ENCODE measurements at regions of chr6 and their contacts with region 1.

Region 1: DNA sequence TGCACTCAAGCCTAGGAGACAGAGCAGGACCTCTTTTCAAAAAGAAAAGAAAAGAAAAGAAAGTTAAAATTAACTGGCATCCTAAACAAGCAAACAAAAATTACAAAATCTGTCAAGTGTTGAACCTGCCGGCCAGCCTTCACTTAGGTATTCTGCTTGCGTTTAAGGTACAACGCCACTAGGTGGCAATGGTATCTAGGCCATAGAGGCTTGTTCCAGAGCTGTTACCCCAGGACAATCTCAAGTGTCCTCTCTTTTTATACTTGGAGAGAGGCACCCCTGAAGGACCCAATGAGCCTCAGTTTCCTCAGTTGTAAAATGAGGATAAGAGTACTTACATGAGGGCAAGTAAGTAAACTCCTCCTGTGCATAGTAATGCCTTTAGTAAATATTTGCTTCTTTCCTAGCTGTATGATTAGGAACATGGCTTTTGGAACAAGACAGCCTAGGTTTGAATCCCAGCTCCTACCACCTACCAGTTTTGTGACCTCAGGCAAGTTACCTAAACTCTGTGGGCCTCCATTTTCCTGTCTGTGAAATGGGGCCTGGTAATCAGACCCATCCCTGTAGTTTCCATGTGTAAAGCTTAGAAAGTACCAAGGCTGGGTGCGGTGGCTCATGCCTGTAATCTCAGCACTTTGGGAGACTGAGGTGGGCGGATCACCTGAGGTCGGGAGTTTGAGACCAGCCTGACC is 5.8 kb upstream of the PACSIN1 start:
- DNase-seq: peak; percentile 63
- H3K4me3 ChIP-seq: no peak overlapping the region
- H3K27ac ChIP-seq: no peak overlapping the region
- H3K4me1 ChIP-seq: no peaks in the 10 kb centered on the region
- H3K27me3 ChIP-seq: peaks cover 1% of the 10 kb centered on the region
- CTCF ChIP-seq: peak; percentile 76

Region 2: GRCh38 chr6:34084591-34085290 is 375.3 kb before region 1 on chr6:
- intact Hi-C with region 1: no loop called
- DNase-seq: no peak
- H3K4me3 ChIP-seq: no peak overlapping the region
- H3K27ac ChIP-seq: no peak overlapping the region
- H3K4me1 ChIP-seq: no peaks in the 10 kb centered on the region
- H3K27me3 ChIP-seq: no peaks in the 10 kb centered on the region
- CTCF ChIP-seq: no peak

Region 3: DNA sequence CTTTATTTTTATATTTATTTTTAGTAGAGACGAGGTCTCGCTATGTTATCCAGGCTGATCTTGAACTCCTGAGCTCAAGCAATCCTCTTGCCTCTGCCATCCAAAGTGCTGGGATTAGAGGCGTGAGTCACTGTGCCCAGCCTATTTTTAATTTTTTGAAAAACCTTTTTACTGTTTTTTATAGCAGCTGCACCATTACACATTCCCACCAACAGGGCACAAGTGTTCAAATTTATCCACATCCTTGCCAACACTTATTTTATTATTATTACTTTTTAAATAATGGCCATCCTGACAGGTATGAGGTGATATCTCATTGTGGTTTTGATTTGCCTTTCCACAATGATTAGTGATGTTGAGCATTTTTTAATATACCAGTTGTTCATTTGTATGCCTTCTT is 48.4 kb after region 1 on chr6:
- intact Hi-C with region 1: no loop called
- DNase-seq: no peak
- H3K4me3 ChIP-seq: no peak overlapping the region
- H3K27ac ChIP-seq: no peak overlapping the region
- H3K4me1 ChIP-seq: no peaks in the 10 kb centered on the region
- H3K27me3 ChIP-seq: no peaks in the 10 kb centered on the region
- CTCF ChIP-seq: no peak

Region 4: DNA sequence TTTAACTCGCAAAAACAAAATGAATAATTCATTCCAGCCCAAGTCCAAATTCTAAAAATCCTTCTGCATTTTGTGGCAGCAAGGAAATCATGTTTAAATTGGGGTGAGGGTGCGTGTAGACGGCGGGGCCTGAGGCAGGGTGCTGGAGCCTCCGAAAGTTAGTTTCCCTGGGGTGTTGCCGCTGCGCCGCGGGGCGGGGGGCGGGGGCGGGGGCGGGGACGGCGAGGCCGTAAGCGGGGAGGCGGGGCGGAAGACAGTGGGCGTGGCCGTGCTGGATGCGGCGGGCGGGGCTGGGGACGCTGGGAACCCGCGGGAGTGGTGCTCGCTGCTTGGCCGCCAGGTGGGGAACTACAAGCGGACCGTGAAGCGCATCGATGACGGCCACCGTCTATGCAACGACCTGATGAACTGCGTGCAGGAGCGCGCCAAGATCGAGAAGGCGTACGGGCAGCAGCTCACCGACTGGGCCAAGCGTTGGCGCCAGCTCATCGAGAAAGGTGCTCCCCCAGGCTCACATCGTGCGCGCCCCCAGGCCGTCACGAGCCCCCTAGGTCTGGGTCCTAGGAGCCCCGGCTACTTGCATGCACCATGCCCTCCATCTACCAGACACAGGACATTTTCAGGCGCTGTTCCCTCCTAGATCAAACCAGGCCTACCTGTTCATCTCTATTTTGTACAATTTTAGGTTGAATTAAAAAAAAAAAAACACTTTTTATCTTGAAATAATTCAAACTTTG is 67.1 kb after region 1 on chr6:
- intact Hi-C with region 1: loop called (anchors 5 kb)
- DNase-seq: peak; percentile 98
- H3K4me3 ChIP-seq: peak overlapping the region; percentile 12
- H3K27ac ChIP-seq: no peak overlapping the region
- H3K4me1 ChIP-seq: no peaks in the 10 kb centered on the region
- H3K27me3 ChIP-seq: no peaks in the 10 kb centered on the region
- CTCF ChIP-seq: peak; percentile 55

Region 5: DNA sequence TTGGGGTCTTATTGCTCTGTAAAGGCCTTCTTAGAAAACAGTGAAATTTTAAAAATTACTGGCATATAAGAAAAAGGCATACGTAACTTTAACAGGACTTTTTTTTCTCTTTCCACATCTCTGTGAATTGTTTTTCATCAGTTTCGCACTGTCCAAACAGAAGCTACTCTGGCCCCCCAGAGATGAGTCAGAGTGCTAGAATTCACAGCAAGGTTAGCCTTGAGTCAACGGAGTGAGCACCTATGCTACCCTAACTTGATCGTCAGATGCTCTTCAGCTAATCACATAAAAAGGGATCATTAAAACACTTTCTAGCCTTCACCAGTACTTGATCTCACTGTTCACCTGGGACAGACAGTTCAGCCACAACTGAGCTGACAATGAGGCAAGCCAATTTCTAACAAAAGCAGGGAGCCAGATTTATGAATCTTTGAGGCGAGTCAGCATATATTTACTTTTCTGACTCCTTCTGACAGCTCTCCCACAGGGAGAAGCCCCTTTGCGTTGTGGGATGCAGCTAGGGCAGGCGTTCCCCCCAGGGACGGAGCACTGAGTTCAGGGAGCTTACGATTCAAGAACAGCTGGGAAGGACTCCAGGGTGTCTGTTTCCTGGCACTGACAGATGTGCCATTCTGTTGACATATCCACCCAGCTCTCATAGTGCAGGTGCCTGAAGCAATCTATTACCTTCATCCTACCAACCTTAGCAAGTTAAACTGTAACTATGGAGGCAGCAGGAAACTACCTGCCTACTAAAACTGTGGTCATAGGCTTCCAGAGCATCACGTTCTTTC is 142.5 kb after region 1 on chr6:
- intact Hi-C with region 1: loop called (anchors 10 kb)
- DNase-seq: peak; percentile 70
- H3K4me3 ChIP-seq: no peak overlapping the region
- H3K27ac ChIP-seq: peak overlapping the region; percentile 64
- H3K4me1 ChIP-seq: peaks cover 3% of the 10 kb centered on the region
- H3K27me3 ChIP-seq: no peaks in the 10 kb centered on the region
- CTCF ChIP-seq: no peak

Measured in colonic mucosa (tissue), 4 donors.